ENCODE measurements at regions of chr7 and their contacts with region 1.

Region 1: GRCh38 chr7:38748056-38748611 is 117.0 kb upstream of the AMPH start:
- DNase-seq: no peak
- ATAC-seq: no peak

Region 2: GRCh38 chr7:38398725-38399321 is 349.3 kb before region 1 on chr7:
- intact Hi-C with region 1: loop called in 1 of 2 experiments (anchors 5 kb)
- DNase-seq: peak; percentile 58
- ATAC-seq: peak; percentile 47 to 50

Region 3: DNA sequence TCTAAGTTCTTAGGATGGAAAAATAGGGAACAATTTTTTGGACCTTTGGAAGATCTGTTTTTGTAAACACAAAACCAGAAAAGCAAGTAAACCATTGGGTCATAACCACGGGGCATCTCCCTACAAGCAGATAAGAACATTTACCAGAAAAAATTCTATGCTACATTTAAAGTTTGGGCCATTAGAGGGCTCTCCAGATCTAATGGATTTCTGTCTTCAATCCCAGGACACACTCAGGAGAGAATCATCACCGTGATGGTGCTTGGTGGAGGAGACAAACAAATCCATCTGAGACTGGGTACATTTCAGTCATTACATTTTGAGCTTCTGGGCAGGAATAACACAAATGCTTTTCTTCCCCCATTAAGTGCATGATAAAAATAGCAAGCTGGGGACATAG is 296.3 kb before region 1 on chr7:
- intact Hi-C with region 1: loop called (anchors 5 to 10 kb)
- DNase-seq: no peak
- ATAC-seq: peak; percentile 47 to 76

Region 4: DNA sequence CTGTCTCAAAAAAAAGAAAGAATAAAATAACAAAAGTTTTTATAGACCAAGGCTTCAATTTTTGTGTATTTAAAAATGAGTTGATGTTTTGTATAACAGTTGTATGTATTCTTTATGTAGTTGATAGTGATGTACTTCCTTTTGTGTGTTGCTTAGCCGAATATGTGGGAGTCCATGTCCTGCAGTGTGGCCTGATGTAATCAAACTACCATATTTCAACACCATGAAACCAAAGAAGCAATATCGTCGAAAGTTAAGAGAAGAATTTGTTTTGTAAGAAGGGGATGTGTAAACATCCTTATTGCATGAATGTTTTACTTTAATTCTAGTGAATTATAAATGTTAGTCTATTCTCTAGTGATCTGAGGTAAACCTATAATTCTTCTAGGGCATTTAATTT is 1329.7 kb after region 1 on chr7:
- intact Hi-C with region 1: no loop called
- DNase-seq: no peak
- ATAC-seq: no peak

Measured in left cardiac atrium (tissue), 4 donors.